ENCODE measurements at regions of chr7 and their contacts with region 1.

Region 1: GRCh38 chr7:124893140-124893827 is 36.3 kb downstream of the POT1 start:
- DNase-seq: no peak
- ATAC-seq: no peak
- H3K4me3 ChIP-seq: no peak overlapping the region
- H3K4me3 Mint-ChIP-seq: no peak overlapping the region
- H3K27ac ChIP-seq: no peak overlapping the region
- H3K27ac Mint-ChIP-seq: no peak overlapping the region
- H3K4me1 ChIP-seq: no peaks in the 10 kb centered on the region
- H3K4me1 Mint-ChIP-seq: peaks cover 0 to 4% (median 0%) of the 10 kb centered on the region in 7 donors
- H3K27me3 ChIP-seq: no peaks in the 10 kb centered on the region
- H3K27me3 Mint-ChIP-seq: no peaks in the 10 kb centered on the region

Region 2: DNA sequence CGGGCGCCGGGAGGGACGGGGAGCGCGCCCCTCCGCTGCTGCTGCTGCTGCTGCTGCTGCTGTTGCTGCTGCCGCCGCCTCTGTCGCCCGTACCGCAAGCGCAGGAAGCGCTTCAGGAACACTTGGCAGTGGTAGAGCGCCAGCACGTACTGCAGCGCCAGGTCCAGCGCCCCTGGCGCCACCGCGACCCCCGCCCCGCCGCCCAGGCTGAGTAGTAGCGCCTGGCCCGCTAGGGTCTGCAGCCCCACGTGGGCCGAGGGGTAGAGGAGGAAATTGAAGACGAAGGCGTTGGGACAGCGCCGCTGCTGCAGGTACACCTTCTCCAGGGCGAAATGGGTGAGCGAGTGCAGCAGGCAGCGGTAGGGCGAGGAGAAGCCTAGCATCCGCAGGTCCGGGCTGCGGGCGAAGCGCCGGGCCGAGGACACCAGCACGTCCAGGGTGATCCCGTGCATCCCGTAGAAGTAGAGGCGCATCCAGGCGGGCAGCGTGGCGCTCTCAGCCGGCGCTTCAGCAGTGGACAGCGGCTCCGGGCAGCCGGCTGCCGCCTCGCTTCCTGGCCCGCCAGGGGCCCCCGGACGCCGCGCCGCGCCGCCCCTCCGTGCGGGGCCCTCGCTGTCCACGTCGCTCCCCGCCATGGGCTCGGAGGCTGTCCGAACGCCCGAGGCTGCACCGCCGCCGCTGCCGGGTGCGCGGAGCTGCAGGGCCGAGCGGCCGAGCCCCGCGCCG is 860.8 kb before region 1 on chr7 and contains the start of gene TMEM229A:
- CTCF ChIA-PET with region 1: no interaction called
- POLR2A ChIA-PET with region 1: no interaction called
- intact Hi-C with region 1: no loop called
- DNase-seq: no peak
- ATAC-seq: no peak
- H3K4me3 ChIP-seq: no peak within 1 kb of the TSS
- H3K4me3 Mint-ChIP-seq: peak within 1 kb of the TSS; percentile 7 to 83 (median 70)
- H3K27ac ChIP-seq: no peak within 1 kb of the TSS
- H3K27ac Mint-ChIP-seq: no peak within 1 kb of the TSS
- H3K4me1 ChIP-seq: no peaks in the 10 kb centered on the region
- H3K4me1 Mint-ChIP-seq: peaks cover 4 to 18% (median 7%) of the 10 kb centered on the region in 7 donors
- H3K27me3 ChIP-seq: peaks cover 4 to 5% of the 10 kb centered on the region in 2 donors
- H3K27me3 Mint-ChIP-seq: peaks cover 51 to 74% (median 61%) of the 10 kb centered on the region in 5 donors
- total RNA-seq, gene TMEM229A: not detected

Region 3: DNA sequence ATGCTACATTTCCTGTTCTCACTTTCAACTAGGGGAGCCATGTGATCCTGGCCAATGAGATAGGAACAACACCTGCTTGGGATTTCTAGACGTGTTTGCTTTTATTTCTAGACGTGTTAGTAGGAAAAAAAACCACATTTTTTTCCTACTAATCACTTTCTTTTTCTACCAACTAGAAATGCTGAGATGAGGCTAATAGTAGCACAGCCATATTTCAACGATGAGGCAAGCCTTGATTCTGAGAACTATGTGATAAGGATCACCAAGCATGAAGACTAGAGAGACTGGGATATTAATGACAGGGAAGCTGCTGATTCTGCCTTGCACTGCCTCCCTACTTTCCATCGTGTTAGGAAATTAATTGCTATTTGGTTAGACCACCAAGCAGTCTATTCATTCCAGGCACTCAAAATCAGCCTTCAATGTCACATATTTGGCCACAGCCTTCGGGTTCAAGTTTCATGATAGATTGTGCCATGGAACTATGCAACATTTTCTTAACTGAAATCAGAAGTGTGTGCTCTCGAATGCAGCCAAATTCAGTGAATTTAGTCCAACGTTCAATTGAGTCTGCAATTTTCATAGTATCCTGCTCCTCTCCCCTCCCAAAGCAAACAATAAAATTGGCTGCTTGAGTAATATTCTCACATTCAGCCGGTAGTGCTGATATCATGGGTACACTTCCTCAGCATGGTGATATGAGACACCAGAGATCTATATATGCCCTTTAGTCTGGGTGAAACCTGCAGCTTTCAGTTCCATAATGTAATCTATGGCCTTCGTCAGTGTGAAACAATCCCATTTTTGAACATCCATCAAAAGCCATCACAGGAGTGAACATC is 225.8 kb before region 1 on chr7:
- CTCF ChIA-PET with region 1: no interaction called
- POLR2A ChIA-PET with region 1: no interaction called
- intact Hi-C with region 1: no loop called
- DNase-seq: no peak
- ATAC-seq: no peak
- H3K4me3 ChIP-seq: no peak overlapping the region
- H3K4me3 Mint-ChIP-seq: no peak overlapping the region
- H3K27ac ChIP-seq: no peak overlapping the region
- H3K27ac Mint-ChIP-seq: no peak overlapping the region
- H3K4me1 ChIP-seq: no peaks in the 10 kb centered on the region
- H3K4me1 Mint-ChIP-seq: no peaks in the 10 kb centered on the region
- H3K27me3 ChIP-seq: no peaks in the 10 kb centered on the region
- H3K27me3 Mint-ChIP-seq: no peaks in the 10 kb centered on the region

Region 4: DNA sequence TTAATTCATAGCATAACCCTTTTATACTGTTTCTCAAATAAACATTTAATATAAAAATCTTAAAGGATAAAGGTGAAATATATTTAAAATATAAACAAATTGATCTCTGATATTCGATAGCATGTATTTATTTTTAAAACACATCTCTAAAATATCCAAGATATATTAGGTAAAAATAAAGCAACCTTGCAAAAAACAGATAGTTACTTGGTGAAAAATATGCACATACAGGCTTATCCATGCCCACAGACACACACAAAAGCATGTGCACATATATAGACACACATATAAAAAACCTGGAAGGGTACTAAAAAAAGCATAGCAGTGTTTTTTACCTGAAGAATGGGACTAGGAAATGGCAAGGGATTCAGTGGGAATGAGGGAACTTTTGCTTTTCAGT is 16.5 kb after region 1 on chr7:
- CTCF ChIA-PET with region 1: no interaction called
- POLR2A ChIA-PET with region 1: no interaction called
- intact Hi-C with region 1: loop called in 1 of 2 experiments (anchors 2 kb)
- DNase-seq: no peak
- ATAC-seq: no peak
- H3K4me3 ChIP-seq: no peak overlapping the region
- H3K4me3 Mint-ChIP-seq: no peak overlapping the region
- H3K27ac ChIP-seq: no peak overlapping the region
- H3K27ac Mint-ChIP-seq: no peak overlapping the region
- H3K4me1 ChIP-seq: no peaks in the 10 kb centered on the region
- H3K4me1 Mint-ChIP-seq: peaks cover under 1 to 23% (median 17%) of the 10 kb centered on the region in 7 donors
- H3K27me3 ChIP-seq: no peaks in the 10 kb centered on the region
- H3K27me3 Mint-ChIP-seq: no peaks in the 10 kb centered on the region